Posterior vena cava (tissue), 2 donors: ENCODE measurements at regions of chr21 and their contacts with region 1.

Region 1: GRCh38 chr21:36959020-36959835 is 7.2 kb downstream of the HLCS start:
- DNase-seq: no peak

Region 2: GRCh38 chr21:37758982-37759381 is 799.8 kb after region 1 on chr21:
- intact Hi-C with region 1: loop called in 1 of 2 experiments (anchors 10 kb)
- DNase-seq: no peak